ENCODE measurements at regions of chr6 and their contacts with region 1.

Region 1: DNA sequence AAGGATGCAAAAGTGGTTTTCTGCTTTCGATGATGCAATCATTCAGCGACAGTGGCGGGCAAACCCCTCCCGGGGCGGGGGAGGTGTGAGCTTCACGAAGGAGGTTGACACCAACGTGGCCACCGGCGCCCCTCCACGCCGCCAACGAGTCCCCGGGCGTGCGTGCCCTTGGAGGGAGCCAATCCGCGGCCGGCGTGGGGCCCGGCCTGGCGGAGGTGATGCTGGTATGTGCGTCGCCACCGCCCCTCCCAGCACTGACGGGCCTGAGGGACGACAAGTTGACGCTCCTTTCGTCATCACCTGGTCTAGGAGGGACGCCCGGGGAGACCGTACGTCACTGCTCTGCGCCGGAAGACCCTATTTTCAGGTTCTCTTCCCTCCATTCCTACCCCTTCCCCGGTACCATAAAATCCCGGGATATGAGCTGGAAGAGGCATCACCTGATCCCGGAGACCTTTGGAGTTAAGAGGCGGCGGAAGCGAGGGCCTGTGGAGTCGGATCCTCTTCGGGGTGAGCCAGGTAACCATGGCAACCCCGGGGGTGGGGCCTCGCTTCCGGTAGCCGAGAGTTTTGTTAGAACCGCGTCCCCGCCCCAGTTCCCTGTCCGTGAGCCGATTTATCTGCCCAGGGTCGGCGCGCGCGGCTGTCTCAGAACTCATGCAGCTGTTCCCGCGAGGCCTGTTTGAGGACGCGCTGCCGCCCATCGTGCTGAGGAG is at the start of gene DXO:
- DNase-seq: peak; percentile 98
- H3K4me3 Mint-ChIP-seq: peak within 1 kb of the TSS; percentile 80
- H3K27ac Mint-ChIP-seq: peak within 1 kb of the TSS; percentile 100
- H3K4me1 Mint-ChIP-seq: peaks cover 21% of the 10 kb centered on the region
- H3K27me3 Mint-ChIP-seq: no peaks in the 10 kb centered on the region
- CTCF ChIP-seq: no peak
- total RNA-seq, gene DXO: 39.1 and 41.4 TPM in 2 replicates

Region 2: GRCh38 chr6:31945507-31946369 is 26.4 kb before region 1 on chr6 and contains the start of gene CFB:
- CTCF ChIA-PET with region 1: interaction called, 4 read pairs
- POLR2A ChIA-PET with region 1: interaction called, 12 read pairs
- intact Hi-C with region 1: no loop called
- DNase-seq: peak; percentile 94
- H3K4me3 Mint-ChIP-seq: peak within 1 kb of the TSS; percentile 64
- H3K27ac Mint-ChIP-seq: peak within 1 kb of the TSS; percentile 90
- H3K4me1 Mint-ChIP-seq: peaks cover 59% of the 10 kb centered on the region
- H3K27me3 Mint-ChIP-seq: no peaks in the 10 kb centered on the region
- CTCF ChIP-seq: no peak
- total RNA-seq, gene CFB: 24.5 and 24.6 TPM in 2 replicates

Region 3: DNA sequence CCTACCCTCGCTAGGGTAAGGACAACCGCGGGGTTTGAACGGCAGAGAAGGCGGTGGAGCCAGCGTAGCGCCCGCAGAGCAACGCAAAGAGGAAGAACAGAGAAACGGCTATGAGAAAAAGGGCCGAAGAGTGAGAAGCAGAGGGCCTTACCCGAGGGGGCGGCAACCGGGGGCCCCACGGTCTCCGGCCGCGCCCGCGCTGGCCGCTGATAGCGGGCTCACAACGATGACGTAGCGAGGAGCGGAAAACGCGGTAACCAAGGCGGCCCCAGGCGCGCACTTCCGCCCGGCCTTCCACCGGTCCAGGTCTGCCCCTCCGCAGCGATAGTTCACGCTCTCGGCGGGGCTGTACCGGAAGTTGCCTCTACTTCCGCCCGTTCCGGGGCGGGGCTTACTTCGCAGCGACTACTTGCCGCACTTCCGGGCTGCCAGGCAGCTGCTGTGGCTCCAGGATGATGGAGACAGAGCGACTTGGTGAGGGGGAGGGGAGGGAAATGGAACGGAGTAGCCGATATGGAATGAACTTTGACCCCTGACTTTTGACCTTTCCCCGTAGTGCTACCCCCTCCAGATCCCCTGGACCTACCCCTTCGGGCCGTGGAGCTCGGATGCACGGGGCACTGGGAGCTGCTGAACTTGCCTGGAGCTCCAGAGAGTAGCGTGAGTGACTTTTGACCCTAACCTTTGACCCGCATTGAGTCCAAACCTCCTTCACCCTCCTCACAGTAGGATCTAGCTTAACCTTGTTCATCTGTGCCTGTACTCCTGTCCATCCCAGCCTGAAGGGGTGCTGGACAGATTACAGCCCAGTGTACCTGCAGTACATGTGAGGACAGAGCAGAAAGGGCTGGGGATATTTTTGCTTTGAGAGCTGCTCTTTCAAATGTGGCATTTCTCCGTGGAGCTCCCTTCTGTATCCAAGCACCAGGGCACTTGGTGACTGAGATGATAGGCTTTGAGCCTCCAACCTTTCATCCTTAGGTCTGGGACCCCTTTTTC is 13.1 kb before region 1 on chr6 and contains the starts of genes NELFE and SKIC2:
- CTCF ChIA-PET with region 1: no interaction called
- POLR2A ChIA-PET with region 1: interaction called, 109 read pairs
- intact Hi-C with region 1: loop called (anchors 1 kb)
- DNase-seq: peak; percentile 96
- H3K4me3 Mint-ChIP-seq: peak within 1 kb of the TSS; percentile 88
- H3K27ac Mint-ChIP-seq: peak within 1 kb of the TSS; percentile 97
- H3K4me1 Mint-ChIP-seq: peaks cover 9% of the 10 kb centered on the region
- H3K27me3 Mint-ChIP-seq: no peaks in the 10 kb centered on the region
- CTCF ChIP-seq: no peak
- total RNA-seq, gene NELFE: 90.7 and 113 TPM in 2 replicates
- total RNA-seq, gene SKIC2: 53.1 and 66.2 TPM in 2 replicates

Region 4: DNA sequence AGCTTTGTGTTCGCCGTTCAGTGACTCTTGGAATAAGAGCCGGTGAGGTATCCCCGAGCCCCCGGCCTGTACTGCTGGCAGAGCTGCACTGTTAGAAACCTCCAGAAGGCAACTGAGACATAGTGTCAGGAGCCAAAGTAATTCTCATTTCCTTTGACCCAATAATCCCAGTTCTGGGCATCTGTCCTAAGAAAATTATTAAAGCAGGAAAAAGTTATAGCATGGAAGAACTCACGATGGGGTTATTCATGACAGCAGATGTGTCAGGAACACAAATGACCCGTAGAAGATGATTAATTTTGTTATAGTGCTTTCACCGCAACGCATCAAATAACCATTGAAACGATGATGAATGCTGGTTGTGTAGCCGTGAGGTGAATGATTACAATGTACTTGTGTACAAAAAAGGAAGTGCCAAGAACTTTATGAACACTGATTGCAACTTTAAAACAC is 86.4 kb after region 1 on chr6:
- CTCF ChIA-PET with region 1: no interaction called
- POLR2A ChIA-PET with region 1: no interaction called
- intact Hi-C with region 1: no loop called
- DNase-seq: no peak
- H3K4me3 Mint-ChIP-seq: no peak overlapping the region
- H3K27ac Mint-ChIP-seq: no peak overlapping the region
- H3K4me1 Mint-ChIP-seq: no peaks in the 10 kb centered on the region
- H3K27me3 Mint-ChIP-seq: no peaks in the 10 kb centered on the region
- CTCF ChIP-seq: no peak

Region 5: DNA sequence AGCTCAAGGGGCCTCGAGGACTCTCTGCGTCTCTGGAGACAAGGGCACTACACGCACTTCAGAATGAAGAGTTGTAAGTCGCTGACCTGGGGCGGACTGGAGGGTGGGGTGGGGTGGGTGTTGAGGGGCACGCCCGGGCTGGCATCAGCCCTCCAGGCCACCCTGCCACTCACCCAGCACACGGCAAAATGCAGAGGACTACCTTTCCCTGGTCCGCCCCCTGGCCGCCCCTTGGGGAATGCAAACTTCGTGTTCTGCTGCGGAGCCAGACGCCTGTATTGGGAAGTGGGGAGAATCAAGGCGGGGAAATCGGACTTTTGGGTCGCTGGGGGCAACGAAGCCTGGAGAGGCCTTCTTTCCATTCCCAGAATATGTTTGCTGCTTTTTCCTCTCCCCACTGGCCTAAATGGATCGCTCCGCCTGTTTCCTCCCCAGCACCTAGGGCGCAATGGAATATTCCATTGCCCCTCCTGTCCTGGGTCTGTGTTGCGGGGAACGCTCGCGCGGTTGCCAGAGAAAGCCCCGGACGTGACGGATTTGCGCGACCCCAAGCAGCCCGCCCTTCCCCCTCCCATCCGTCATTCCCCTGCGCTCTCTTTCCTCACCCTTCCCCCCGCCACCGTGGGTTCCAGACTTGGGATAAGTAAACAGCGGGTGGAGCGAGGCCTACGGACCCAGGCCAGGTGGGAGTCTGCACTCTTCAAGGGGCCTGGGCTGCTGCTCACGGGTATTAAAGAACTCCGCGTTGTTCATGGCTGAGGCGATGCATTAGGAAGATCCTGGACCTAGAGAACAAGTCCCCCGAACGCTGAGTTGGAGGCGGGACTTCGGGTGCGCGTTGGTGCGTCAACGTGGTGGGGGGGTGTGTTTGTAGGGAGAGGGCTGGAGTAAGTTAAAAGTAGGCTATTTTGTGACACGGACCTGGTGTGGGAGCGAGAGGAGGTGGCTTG is 181.7 kb after region 1 on chr6 and contains the start of gene PPT2:
- CTCF ChIA-PET with region 1: no interaction called
- POLR2A ChIA-PET with region 1: no interaction called
- intact Hi-C with region 1: loop called (anchors 10 kb)
- DNase-seq: peak; percentile 79
- H3K4me3 Mint-ChIP-seq: peak within 1 kb of the TSS; percentile 86
- H3K27ac Mint-ChIP-seq: peak within 1 kb of the TSS; percentile 83
- H3K4me1 Mint-ChIP-seq: peaks cover 18% of the 10 kb centered on the region
- H3K27me3 Mint-ChIP-seq: no peaks in the 10 kb centered on the region
- CTCF ChIP-seq: no peak
- total RNA-seq, gene PPT2: 3.7 and 5.4 TPM in 2 replicates

Measured in MCF 10A (cell line).